CD4-positive, alpha-beta memory T cell (primary cell): ENCODE measurements at regions of chr3 and their contacts with region 1.

Region 1: DNA sequence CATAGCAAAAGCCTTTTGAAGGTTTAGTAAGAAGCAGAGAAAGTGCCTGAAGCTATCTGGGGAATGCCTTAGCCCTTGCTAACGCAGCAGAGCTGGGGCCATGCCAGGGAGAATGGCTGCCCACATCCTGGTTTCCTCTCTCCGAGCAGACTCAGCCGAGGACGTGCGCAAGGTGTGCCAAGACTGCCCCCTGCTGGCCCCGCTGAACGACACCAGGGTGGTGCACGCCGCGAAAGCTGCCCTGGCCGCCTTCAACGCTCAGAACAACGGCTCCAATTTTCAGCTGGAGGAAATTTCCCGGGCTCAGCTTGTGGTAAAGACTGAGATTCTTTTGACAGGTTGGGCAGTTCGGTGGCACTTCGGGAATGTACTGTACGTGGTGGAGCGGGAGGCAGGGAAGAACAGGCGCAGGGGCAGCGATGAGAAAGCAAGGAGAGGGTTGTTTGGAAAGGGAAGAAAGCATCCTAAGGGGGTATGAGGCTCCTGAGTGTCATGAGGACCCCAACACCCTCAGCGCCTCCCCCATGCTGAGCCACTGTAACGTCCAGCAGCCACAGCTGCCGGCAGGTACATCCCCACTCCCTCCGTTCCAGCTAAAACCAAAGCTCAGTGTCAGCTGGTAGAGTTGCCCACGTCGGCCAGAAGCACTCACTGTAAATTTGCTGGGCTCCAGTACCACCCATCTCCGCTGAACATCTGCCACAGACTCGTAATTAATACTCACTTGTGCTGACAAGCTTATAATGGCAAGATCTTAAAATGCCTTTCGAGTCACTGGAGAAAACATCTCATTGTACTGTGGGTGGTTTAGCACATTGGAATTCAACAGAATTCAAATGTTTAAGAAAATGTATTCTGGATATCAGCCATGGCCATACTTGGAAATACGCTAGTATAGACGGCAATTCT is 4.4 kb downstream of the AHSG start:
- DNase-seq: peak; percentile 81 to 92 (median 86)
- H3K4me3 ChIP-seq: no peak overlapping the region
- H3K4me3 Mint-ChIP-seq: peak overlapping the region; percentile 37 to 77 (median 63)
- H3K27ac ChIP-seq: no peak overlapping the region
- H3K27ac Mint-ChIP-seq: peak overlapping the region in 5 of 7 donors; percentile 41 to 72 (median 69)
- H3K4me1 ChIP-seq: peaks cover 18% of the 10 kb centered on the region
- H3K4me1 Mint-ChIP-seq: peaks cover 10 to 28% (median 20%) of the 10 kb centered on the region in 4 donors
- H3K27me3 ChIP-seq: no peaks in the 10 kb centered on the region
- H3K27me3 Mint-ChIP-seq: peaks cover 9 to 18% of the 10 kb centered on the region in 2 donors

Region 2: GRCh38 chr3:185942907-185943759 is 674.2 kb before region 1 on chr3:
- CTCF ChIA-PET with region 1: interaction called, 37 read pairs
- POLR2A ChIA-PET with region 1: interaction called, 7 read pairs
- intact Hi-C with region 1: no loop called
- DNase-seq: peak; percentile 81 to 84 (median 83)
- H3K4me3 ChIP-seq: peak overlapping the region in 1 of 2 donors; percentile 55
- H3K4me3 Mint-ChIP-seq: peak overlapping the region; percentile 43 to 76 (median 66)
- H3K27ac ChIP-seq: no peak overlapping the region
- H3K27ac Mint-ChIP-seq: peak overlapping the region in 5 of 7 donors; percentile 32 to 75 (median 62)
- H3K4me1 ChIP-seq: peaks cover 14% of the 10 kb centered on the region
- H3K4me1 Mint-ChIP-seq: peaks cover 6 to 24% (median 14%) of the 10 kb centered on the region in 4 donors
- H3K27me3 ChIP-seq: no peaks in the 10 kb centered on the region
- H3K27me3 Mint-ChIP-seq: peaks cover 2 to 3% of the 10 kb centered on the region in 2 donors

Region 3: DNA sequence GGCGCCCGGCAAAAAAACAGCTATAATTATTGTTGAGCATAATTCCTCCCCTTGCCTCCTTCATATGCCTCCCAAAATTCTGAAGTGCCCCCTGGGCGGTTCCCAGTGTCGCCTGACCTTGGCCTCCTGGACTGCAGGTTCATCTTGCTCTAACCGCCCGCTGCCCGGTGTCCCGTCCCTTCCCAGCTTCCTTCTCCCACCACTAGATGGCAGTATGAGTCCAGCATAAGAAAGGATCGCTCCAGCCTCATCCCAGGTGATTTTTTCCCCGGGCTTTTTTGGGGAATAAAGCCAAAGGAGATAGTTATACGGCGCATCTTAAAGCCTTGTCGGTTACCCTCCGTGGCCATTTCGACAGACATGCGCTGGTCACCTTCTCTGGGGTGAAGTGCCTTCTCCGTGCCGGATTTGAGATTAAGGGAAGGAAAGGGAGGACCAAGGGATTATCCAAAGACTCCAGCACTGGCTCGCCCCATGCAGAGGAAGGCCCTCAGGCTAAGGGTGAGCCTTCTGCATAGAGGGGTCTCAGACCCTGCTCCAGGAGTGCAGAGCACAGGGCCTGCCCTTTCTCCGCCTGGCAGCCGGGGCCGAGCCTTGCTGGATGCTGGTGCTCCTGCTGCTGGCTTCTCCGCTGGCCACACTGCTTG is 633.7 kb before region 1 on chr3:
- CTCF ChIA-PET with region 1: interaction called, 91 read pairs
- POLR2A ChIA-PET with region 1: interaction called, 3 read pairs
- intact Hi-C with region 1: loop called (anchors 1 kb)
- DNase-seq: peak in 4 of 5 donors; percentile 47 to 62 (median 51)
- H3K4me3 ChIP-seq: no peak overlapping the region
- H3K4me3 Mint-ChIP-seq: peak overlapping the region in 1 of 8 donors; percentile 11
- H3K27ac ChIP-seq: no peak overlapping the region
- H3K27ac Mint-ChIP-seq: no peak overlapping the region
- H3K4me1 ChIP-seq: peaks cover 3% of the 10 kb centered on the region
- H3K4me1 Mint-ChIP-seq: peaks cover 0 to 8% (median 2%) of the 10 kb centered on the region in 4 donors
- H3K27me3 ChIP-seq: no peaks in the 10 kb centered on the region
- H3K27me3 Mint-ChIP-seq: peaks cover 4% of the 10 kb centered on the region in 2 donors

Region 4: GRCh38 chr3:186320862-186321568 is 296.3 kb before region 1 on chr3:
- CTCF ChIA-PET with region 1: no interaction called
- POLR2A ChIA-PET with region 1: no interaction called
- intact Hi-C with region 1: no loop called
- DNase-seq: no peak
- H3K4me3 ChIP-seq: no peak overlapping the region
- H3K4me3 Mint-ChIP-seq: no peak overlapping the region
- H3K27ac ChIP-seq: no peak overlapping the region
- H3K27ac Mint-ChIP-seq: no peak overlapping the region
- H3K4me1 ChIP-seq: no peaks in the 10 kb centered on the region
- H3K4me1 Mint-ChIP-seq: no peaks in the 10 kb centered on the region
- H3K27me3 ChIP-seq: no peaks in the 10 kb centered on the region
- H3K27me3 Mint-ChIP-seq: peaks cover 2 to 9% of the 10 kb centered on the region in 2 donors

Region 5: DNA sequence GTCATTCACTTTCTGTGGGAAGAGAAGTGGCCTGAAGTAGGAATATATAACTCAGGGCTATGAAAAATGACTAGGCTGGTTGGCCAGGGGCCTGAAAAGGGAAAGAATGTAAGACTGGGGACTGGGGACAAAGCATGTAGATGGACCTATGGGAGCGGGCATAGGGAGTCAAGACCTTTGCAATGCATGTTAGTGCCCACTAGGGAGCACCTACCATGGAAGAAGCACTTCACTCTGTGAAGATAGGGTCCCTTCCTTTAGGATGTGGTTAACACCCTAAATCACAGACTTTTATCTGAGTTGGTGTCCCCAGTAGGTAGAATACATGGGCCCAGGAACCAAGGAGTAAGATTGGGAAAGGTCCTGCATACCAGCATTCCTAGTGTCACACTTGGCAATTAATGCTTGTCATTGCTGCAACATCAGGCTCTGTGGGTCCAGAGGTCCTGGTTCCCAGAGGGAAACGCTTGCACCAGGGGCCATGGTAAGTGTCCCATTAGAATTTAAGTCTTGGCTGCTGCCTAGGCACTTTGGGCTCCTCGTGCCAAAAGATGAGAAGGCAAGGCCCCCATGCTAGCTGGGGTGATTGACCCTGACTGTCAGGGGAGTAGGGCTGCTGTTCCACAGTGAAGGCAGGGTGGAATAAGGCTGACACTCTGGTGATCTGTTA is 152.7 kb before region 1 on chr3:
- CTCF ChIA-PET with region 1: no interaction called
- POLR2A ChIA-PET with region 1: no interaction called
- intact Hi-C with region 1: no loop called
- DNase-seq: no peak
- H3K4me3 ChIP-seq: no peak overlapping the region
- H3K4me3 Mint-ChIP-seq: no peak overlapping the region
- H3K27ac ChIP-seq: no peak overlapping the region
- H3K27ac Mint-ChIP-seq: no peak overlapping the region
- H3K4me1 ChIP-seq: no peaks in the 10 kb centered on the region
- H3K4me1 Mint-ChIP-seq: peaks cover 0 to 4% (median 0%) of the 10 kb centered on the region in 4 donors
- H3K27me3 ChIP-seq: no peaks in the 10 kb centered on the region
- H3K27me3 Mint-ChIP-seq: peaks cover 3% of the 10 kb centered on the region in 2 donors

Region 6: GRCh38 chr3:186570096-186570940 is 47.0 kb before region 1 on chr3 and contains the start of gene DNAJB11:
- CTCF ChIA-PET with region 1: interaction called, 56 read pairs
- POLR2A ChIA-PET with region 1: interaction called, 12 read pairs
- intact Hi-C with region 1: loop called (anchors 2 kb)
- DNase-seq: peak; percentile 96 to 100 (median 99)
- H3K4me3 ChIP-seq: peak within 1 kb of the TSS; percentile 71 to 93
- H3K4me3 Mint-ChIP-seq: peak within 1 kb of the TSS; percentile 89 to 100 (median 94)
- H3K27ac ChIP-seq: peak within 1 kb of the TSS; percentile 91
- H3K27ac Mint-ChIP-seq: peak within 1 kb of the TSS; percentile 95 to 99 (median 98)
- H3K4me1 ChIP-seq: peaks cover 37% of the 10 kb centered on the region
- H3K4me1 Mint-ChIP-seq: peaks cover 30 to 71% (median 45%) of the 10 kb centered on the region in 4 donors
- H3K27me3 ChIP-seq: no peaks in the 10 kb centered on the region
- H3K27me3 Mint-ChIP-seq: no peaks in the 10 kb centered on the region
- total RNA-seq, gene DNAJB11: 34.0 to 38.6 TPM

Region 7: GRCh38 chr3:186630950-186631641 is 13.8 kb after region 1 on chr3:
- CTCF ChIA-PET with region 1: interaction called, 48 read pairs
- POLR2A ChIA-PET with region 1: no interaction called
- intact Hi-C with region 1: no loop called
- DNase-seq: no peak
- H3K4me3 ChIP-seq: no peak overlapping the region
- H3K4me3 Mint-ChIP-seq: no peak overlapping the region
- H3K27ac ChIP-seq: no peak overlapping the region
- H3K27ac Mint-ChIP-seq: peak overlapping the region in 1 of 7 donors; percentile 44
- H3K4me1 ChIP-seq: no peaks in the 10 kb centered on the region
- H3K4me1 Mint-ChIP-seq: peaks cover 0 to 1% (median 0%) of the 10 kb centered on the region in 4 donors
- H3K27me3 ChIP-seq: no peaks in the 10 kb centered on the region
- H3K27me3 Mint-ChIP-seq: peaks cover 8 to 10% of the 10 kb centered on the region in 2 donors

Region 8: DNA sequence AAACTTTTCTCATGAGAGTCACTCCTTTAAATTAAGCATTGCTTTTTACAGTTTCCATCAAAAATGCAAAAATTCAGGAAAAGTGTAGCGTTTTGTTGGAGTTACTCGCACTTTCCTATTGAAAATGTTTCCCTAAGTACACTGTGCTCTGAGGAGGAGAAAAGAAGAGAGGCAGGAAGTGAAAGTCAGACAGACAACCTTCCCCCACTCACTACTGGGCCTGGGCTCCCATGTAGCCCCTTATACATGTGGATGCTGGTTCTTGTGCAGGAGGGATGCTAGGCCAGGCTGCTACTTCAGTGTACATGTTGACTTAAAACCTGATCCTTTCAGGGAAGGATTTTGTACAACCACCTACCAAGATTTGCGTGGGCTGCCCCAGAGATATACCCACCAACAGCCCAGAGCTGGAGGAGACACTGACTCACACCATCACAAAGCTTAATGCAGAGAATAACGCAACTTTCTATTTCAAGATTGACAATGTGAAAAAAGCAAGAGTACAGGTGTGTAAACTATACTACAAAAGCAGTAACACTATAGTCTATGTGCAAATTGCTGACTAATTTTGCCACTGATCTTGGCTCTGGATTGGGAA is 115.0 kb after region 1 on chr3:
- CTCF ChIA-PET with region 1: no interaction called
- POLR2A ChIA-PET with region 1: no interaction called
- intact Hi-C with region 1: no loop called
- DNase-seq: no peak
- H3K4me3 ChIP-seq: no peak overlapping the region
- H3K4me3 Mint-ChIP-seq: no peak overlapping the region
- H3K27ac ChIP-seq: no peak overlapping the region
- H3K27ac Mint-ChIP-seq: no peak overlapping the region
- H3K4me1 ChIP-seq: no peaks in the 10 kb centered on the region
- H3K4me1 Mint-ChIP-seq: no peaks in the 10 kb centered on the region
- H3K27me3 ChIP-seq: peaks cover 3% of the 10 kb centered on the region
- H3K27me3 Mint-ChIP-seq: peaks cover 1 to 2% of the 10 kb centered on the region in 2 donors

Region 9: GRCh38 chr3:186806089-186807055 is 189.1 kb after region 1 on chr3 and contains the start of gene RFC4:
- CTCF ChIA-PET with region 1: interaction called, 20 read pairs
- POLR2A ChIA-PET with region 1: no interaction called
- intact Hi-C with region 1: no loop called
- DNase-seq: peak; percentile 81 to 88 (median 83)
- H3K4me3 ChIP-seq: peak within 1 kb of the TSS; percentile 90 to 98
- H3K4me3 Mint-ChIP-seq: peak within 1 kb of the TSS; percentile 93 to 98 (median 96)
- H3K27ac ChIP-seq: peak within 1 kb of the TSS; percentile 93
- H3K27ac Mint-ChIP-seq: peak within 1 kb of the TSS; percentile 89 to 97 (median 95)
- H3K4me1 ChIP-seq: peaks cover 18% of the 10 kb centered on the region
- H3K4me1 Mint-ChIP-seq: peaks cover 11 to 33% (median 17%) of the 10 kb centered on the region in 4 donors
- H3K27me3 ChIP-seq: no peaks in the 10 kb centered on the region
- H3K27me3 Mint-ChIP-seq: no peaks in the 10 kb centered on the region
- total RNA-seq, gene RFC4: 21.5 to 24.6 TPM

Region 10: DNA sequence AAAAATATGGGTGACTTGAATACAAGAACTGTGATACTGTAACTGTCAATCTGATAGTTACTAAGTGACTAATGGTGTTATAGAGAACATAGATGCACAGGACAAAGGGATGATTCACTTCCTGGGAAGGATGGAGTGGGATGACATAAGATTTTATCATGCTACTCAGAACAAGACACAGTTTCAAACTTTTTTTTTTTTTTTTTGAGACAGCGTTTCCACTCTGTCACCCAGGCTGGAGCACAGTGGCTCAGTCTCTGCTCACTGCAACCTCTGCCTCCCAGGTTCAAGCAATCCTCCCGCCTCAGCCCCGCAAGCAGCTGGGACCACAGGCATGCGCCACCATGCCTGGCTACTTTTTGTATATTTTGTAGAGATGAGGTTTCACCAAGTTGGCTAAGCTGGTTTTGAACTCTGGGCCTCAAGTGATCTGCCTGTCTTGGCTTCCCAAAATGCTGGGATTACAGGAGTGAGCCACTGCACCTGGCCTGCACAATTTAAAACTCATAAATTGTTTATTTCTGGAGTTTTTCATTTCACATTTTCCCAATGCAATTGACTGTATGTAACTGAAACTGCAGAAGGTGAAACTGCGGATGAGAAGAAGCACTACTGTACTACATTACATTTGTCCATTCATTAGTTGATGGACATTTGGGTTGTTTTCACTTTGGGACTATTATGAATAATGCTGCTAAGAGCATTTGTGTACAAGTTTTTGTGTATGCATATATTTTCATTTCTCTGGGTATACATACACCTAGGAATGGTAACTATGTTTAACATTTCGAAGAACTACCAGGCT is 265.8 kb after region 1 on chr3:
- CTCF ChIA-PET with region 1: no interaction called
- POLR2A ChIA-PET with region 1: no interaction called
- intact Hi-C with region 1: no loop called
- DNase-seq: no peak
- H3K4me3 ChIP-seq: no peak overlapping the region
- H3K4me3 Mint-ChIP-seq: peak overlapping the region in 6 of 8 donors; percentile 17 to 77 (median 39)
- H3K27ac ChIP-seq: no peak overlapping the region
- H3K27ac Mint-ChIP-seq: peak overlapping the region in 5 of 7 donors; percentile 11 to 26 (median 17)
- H3K4me1 ChIP-seq: peaks cover 45% of the 10 kb centered on the region
- H3K4me1 Mint-ChIP-seq: peaks cover 30 to 55% (median 40%) of the 10 kb centered on the region in 4 donors
- H3K27me3 ChIP-seq: no peaks in the 10 kb centered on the region
- H3K27me3 Mint-ChIP-seq: no peaks in the 10 kb centered on the region

Region 11: DNA sequence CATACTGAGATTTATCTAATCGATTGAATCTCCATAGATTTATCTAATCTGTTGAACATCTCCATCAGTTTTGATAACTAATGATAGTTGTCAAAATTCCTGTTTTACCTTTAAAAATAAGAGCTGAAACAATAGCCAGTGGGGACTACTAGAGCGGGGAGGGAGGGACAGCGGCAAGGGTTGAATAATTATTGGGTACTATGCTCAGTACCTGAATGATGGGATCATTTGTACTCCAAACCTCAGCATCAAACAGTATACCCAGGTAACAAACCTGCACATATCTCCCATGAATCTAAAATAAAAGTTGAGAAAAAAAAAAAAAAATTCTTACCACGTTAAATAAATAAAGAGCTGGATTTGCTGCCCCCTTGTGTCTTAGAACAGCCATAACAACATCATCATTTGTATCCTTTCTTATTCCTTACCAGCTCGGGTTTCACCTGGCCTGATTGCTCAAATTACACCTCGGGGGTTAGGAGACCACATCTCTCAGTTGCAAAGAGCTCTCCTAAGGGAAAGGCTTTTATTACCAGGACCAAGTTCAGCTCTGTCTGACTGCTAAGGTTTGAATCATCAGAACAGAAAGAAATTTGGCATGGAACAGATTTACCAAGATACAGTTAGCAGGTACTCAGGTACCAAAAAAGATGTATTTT is 547.7 kb after region 1 on chr3:
- CTCF ChIA-PET with region 1: interaction called, 11 read pairs
- POLR2A ChIA-PET with region 1: no interaction called
- intact Hi-C with region 1: loop called (anchors 5 kb)
- DNase-seq: peak; percentile 66 to 73 (median 70)
- H3K4me3 ChIP-seq: no peak overlapping the region
- H3K4me3 Mint-ChIP-seq: no peak overlapping the region
- H3K27ac ChIP-seq: no peak overlapping the region
- H3K27ac Mint-ChIP-seq: no peak overlapping the region
- H3K4me1 ChIP-seq: peaks cover 2% of the 10 kb centered on the region
- H3K4me1 Mint-ChIP-seq: peaks cover 0 to 8% (median 4%) of the 10 kb centered on the region in 4 donors
- H3K27me3 ChIP-seq: no peaks in the 10 kb centered on the region
- H3K27me3 Mint-ChIP-seq: peaks cover 6 to 7% of the 10 kb centered on the region in 2 donors